AG04450 (cell line): ENCODE measurements at regions of chr11 and their contacts with region 1.

Region 1: DNA sequence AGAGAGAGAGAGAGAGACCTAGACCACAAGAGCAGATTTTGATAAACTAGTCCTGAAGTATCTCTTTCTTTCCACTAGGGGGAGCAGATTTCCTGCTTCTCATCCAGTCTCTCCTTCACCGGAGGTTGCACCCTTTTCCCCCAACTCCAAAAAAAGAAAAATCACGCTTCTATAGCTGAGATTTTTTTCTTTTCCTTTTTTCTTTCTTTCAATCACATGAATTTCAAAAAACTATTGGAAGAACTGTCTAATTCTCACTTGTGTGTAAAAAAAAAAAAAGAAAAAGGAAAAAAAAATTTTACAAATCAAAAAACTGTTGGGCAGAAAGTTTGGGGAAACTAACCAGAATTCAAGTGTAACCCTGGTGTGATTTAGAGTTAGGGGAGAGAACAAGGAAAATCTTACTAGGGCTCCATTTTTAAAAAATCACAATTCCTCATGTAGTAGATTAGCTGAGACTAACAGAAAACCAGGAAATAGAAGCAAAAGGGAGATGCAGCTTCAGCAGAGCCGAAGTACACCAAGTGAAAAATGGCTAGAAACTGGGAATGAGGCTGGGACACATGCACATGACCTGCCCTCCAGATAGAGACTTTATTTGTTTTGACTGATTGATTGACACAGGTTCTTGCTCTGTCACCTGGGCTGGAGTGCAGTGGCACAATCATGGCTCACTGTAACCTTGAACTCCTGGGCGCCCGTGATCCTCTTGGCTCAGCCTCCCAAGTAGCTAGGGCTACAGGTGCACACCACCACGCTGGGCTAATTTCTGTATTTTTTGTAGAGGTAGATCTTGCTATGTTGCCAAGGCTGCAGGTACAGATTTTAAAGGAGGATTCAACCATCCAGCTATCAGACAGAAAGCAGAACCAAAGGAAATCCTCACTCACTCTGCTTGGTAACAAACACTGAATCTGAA is 27.1 kb downstream of the SDHD start:
- DNase-seq: no peak
- H3K4me3 ChIP-seq: no peak overlapping the region
- H3K27ac ChIP-seq: no peak overlapping the region
- H3K27me3 ChIP-seq: no peaks in the 10 kb centered on the region
- CTCF ChIP-seq: peak; percentile 77

Region 2: GRCh38 chr11:112086422-112087191 is 27.2 kb before region 1 on chr11 and contains the starts of genes SDHD and TIMM8B:
- CTCF ChIA-PET with region 1: interaction called, 12 read pairs
- POLR2A ChIA-PET with region 1: no interaction called
- DNase-seq: peak; percentile 91
- H3K4me3 ChIP-seq: peak within 1 kb of the TSS; percentile 99
- H3K27ac ChIP-seq: peak within 1 kb of the TSS; percentile 34
- H3K27me3 ChIP-seq: no peaks in the 10 kb centered on the region
- CTCF ChIP-seq: peak; percentile 40
- polyA plus RNA-seq, gene SDHD: 122 and 154 TPM in 2 replicates
- polyA plus RNA-seq, gene TIMM8B: 106 and 143 TPM in 2 replicates

Region 3: GRCh38 chr11:112128483-112129121 is 14.8 kb after region 1 on chr11:
- CTCF ChIA-PET with region 1: interaction called, 61 read pairs
- POLR2A ChIA-PET with region 1: no interaction called
- DNase-seq: peak; percentile 10
- H3K4me3 ChIP-seq: no peak overlapping the region
- H3K27ac ChIP-seq: no peak overlapping the region
- H3K27me3 ChIP-seq: no peaks in the 10 kb centered on the region
- CTCF ChIP-seq: no peak

Region 4: DNA sequence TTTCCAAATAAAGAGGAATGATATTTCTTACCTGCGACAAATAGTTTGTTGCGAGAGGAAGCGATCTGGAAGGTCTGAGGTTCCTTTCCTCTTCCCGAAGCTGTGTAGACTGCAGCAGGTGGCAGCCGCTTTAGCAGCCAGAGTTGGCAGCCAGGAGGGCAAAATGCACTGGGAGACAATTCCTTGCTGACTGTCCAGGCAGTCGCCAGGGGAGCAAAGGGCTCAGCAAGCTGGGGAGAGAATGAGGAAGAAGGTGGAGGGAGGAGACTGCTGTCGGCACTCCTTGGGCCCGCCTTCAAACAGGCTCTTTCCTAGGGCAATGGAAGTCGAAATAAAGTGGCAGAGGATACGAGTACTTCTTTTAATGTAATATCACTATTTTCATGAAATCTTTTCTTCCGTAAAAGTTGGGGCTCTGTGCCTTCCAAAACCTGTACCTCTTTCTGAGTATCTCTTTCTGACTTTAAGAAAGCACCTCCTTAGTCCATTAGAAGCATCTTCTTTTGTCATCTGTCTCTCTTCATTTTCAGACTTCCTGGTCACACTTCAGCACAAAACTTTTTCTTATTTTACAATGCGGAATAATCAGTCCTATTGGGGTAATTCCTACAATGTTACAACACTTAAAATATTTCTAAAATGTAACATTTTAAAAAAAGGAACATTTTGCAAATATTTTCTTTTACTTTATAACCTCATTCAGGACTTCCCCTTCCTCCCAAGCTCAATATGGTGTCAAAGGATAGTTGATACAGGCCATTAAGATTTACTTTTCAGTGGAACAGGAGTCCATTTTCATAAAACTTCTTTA is 50.3 kb after region 1 on chr11 and contains the start of gene IL18:
- CTCF ChIA-PET with region 1: interaction called, 14 read pairs
- POLR2A ChIA-PET with region 1: interaction called, 3 read pairs
- DNase-seq: no peak
- H3K4me3 ChIP-seq: no peak within 1 kb of the TSS
- H3K27ac ChIP-seq: no peak within 1 kb of the TSS
- H3K27me3 ChIP-seq: no peaks in the 10 kb centered on the region
- CTCF ChIP-seq: no peak
- polyA plus RNA-seq, gene IL18: 0.12 and 0.46 TPM in 2 replicates

Region 5: GRCh38 chr11:112219476-112220232 is 105.9 kb after region 1 on chr11:
- CTCF ChIA-PET with region 1: interaction called, 41 read pairs
- POLR2A ChIA-PET with region 1: no interaction called
- DNase-seq: peak; percentile 52
- H3K4me3 ChIP-seq: no peak overlapping the region
- H3K27ac ChIP-seq: no peak overlapping the region
- H3K27me3 ChIP-seq: no peaks in the 10 kb centered on the region
- CTCF ChIP-seq: peak; percentile 75

Region 6: DNA sequence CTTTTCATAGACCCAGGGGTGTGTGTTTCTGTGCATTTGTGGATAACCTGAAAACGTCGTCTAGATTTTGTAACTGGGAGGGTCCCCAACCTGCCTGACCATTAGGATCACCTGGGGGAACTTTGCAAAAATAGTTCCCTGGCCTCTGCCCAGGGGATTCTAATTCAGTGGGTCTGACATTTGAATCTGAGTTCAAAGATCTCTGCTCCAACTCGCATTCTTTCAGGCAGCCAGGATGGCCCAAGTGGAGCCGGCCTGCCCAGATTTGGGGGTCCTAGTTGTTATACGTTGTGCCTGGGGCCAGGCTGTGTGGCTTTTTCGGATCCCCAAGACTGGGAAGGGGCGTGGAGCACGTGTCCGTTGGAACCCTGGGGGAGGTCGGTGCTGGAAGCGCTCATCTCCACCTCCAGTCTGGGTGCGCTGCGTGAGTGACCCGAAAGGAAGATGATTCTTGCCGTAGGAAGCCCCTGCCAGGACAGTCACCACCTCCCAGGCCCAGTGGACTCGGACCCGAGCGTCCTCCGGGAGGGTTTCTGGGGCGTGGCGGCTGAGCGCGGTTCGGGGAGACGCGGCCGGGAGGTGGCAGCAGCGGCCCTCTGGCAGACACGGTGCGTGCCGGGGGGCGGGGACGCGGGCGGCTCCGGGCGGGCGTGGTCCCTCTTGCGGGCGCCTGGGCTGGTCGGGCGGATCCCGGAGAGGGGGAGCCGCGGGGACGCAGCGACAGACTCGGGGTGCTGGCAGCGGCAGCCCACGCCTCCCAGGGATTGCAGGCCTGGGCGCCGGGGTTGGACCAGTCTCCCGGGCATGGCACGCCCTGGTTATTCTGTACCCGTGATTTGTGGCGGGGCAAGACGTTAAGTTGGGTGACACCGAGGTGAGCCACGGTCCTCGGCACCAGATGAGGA is 176.0 kb after region 1 on chr11:
- CTCF ChIA-PET with region 1: interaction called, 140 read pairs
- POLR2A ChIA-PET with region 1: no interaction called
- DNase-seq: no peak
- H3K4me3 ChIP-seq: peak overlapping the region; percentile 78
- H3K27ac ChIP-seq: no peak overlapping the region
- H3K27me3 ChIP-seq: no peaks in the 10 kb centered on the region
- CTCF ChIP-seq: peak; percentile 65